Gastrocnemius medialis (tissue), 4 donors: ENCODE measurements at regions of chr3 and their contacts with region 1.

Region 1: DNA sequence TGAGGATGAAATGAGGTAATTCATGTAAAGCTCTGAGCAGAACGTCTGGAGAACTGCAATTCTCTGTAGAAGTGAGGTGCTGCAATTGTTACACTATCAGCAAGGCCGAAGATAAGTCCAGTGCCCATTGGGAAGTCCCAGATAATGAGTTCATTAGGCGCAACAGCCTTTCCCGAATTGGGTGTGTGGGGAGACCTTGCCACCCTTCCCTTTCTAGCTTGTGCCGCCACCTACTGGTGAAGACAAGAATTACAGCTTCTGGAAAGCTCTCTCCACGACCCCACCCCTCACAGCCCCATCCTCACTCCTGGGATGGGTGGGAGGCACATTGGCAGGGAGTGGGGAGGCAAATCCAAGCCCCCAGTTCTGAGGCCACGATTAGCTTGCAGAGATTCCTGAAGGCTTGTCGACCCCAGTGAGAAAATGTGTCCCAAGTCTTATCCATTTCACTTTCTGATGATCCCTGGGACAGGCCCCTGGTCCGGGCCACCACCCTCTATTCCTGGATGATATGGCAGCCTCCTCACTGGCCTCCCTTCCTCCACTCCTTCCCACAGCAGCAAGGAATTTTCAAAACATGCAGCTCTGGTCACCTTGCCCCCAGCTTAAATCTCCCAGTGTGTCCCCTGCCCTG is 36.4 kb downstream of the FAM3D start:
- DNase-seq: peak; percentile 30 to 36
- ATAC-seq: peak; percentile 50 to 58
- H3K4me3 ChIP-seq: no peak overlapping the region
- H3K27ac ChIP-seq: peak overlapping the region in 3 of 4 donors; percentile 45 to 57 (median 46)
- H3K4me1 ChIP-seq: peaks cover 26 to 33% of the 10 kb centered on the region in 2 donors
- H3K27me3 ChIP-seq: no peaks in the 10 kb centered on the region
- CTCF ChIP-seq: peak; percentile 80 to 96 (median 91)
- POLR2A ChIP-seq: no peak

Region 2: GRCh38 chr3:58568572-58569286 is 61.5 kb before region 1 on chr3:
- in situ Hi-C with region 1: loop called in 3 of 4 experiments (anchors 5 kb)
- intact Hi-C with region 1: loop called (anchors 1 kb)
- DNase-seq: peak; percentile 35 to 62
- ATAC-seq: peak; percentile 61 to 82
- H3K4me3 ChIP-seq: no peak overlapping the region
- H3K27ac ChIP-seq: no peak overlapping the region
- H3K4me1 ChIP-seq: no peaks in the 10 kb centered on the region
- H3K27me3 ChIP-seq: no peaks in the 10 kb centered on the region
- CTCF ChIP-seq: peak; percentile 81 to 95 (median 89)
- POLR2A ChIP-seq: no peak

Region 3: DNA sequence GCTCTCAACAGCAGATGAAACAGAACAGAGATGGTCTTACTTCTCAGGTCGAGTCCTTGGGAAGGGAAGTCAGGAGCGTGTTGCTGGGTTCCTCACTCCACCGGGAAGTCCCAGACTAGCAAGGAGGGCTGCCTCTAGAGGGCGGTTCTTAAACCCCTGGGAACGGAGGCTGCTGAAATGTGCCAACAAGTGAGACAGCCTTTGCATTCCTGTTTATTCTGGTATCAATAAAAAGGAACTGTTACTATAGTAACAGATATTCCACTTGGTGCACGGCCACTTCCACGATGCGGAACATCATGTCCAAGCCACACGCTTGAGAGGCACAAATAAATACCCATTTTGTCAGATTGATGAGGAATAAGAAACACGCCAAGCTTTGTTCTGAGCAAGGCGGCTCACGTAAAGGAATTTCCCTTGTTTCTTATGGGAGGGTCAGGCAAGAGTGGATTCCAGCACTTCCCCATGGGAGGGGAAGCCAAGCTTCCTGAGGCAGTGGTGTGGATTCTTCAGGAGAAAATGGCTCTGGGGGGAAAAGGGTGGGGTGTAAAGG is 52.8 kb before region 1 on chr3 and contains the start of gene FAM107A:
- in situ Hi-C with region 1: loop called in 2 of 4 experiments (anchors 5 kb)
- intact Hi-C with region 1: no loop called
- DNase-seq: peak in 1 of 2 donors; percentile 30
- ATAC-seq: peak; percentile 75 to 86
- H3K4me3 ChIP-seq: peak within 1 kb of the TSS; percentile 32 to 55 (median 43)
- H3K27ac ChIP-seq: peak within 1 kb of the TSS; percentile 66 to 81 (median 81)
- H3K4me1 ChIP-seq: peaks cover 0 to 4% of the 10 kb centered on the region in 2 donors
- H3K27me3 ChIP-seq: no peaks in the 10 kb centered on the region
- CTCF ChIP-seq: peak in 1 of 5 experiments; percentile 16
- POLR2A ChIP-seq: peak; percentile 31 to 63
- total RNA-seq, gene FAM107A: 21.1 to 28.5 (median 27.6) TPM

Region 4: DNA sequence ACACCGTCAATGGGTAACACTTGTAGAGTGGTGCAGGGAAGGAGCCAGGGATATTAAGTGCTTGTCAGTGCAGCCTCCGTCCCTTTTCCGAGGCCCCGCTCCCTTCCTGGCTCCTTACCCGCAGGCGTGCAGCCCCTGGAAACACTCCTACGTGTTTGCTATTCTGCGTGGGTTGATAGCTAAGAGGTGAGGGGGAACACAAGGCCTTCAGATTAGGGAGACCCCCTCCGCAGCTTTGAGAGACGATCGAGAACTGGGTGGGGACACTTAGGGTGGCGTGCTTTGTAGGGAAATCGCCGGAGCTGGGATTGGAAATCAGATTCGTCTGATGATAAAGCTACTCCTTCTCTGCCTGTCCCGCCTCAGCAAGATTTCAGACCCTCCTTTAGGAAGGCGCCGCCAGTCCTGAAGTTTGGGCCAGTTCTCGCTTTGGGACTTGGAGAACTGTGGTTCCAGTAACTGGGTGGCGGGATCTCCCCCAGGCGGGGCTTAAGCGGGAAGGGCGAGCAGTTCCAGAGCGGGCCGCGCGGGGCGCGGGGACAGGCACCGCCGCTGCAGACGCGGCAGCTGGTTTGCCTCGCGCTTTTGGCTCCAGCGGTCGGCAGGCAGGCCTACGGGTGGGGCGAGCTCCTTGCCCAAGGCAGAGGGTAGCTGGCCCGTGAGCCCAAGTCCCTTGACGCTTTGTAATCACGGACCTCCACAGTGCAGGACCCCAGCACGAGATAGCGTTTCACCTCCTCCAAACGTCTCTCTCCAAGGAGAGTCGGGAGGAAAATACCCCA is 45.0 kb before region 1 on chr3:
- in situ Hi-C with region 1: no loop called
- intact Hi-C with region 1: loop called (anchors 5 kb)
- DNase-seq: peak; percentile 59 to 75
- ATAC-seq: peak; percentile 89 to 94
- H3K4me3 ChIP-seq: peak overlapping the region; percentile 64 to 81 (median 75)
- H3K27ac ChIP-seq: peak overlapping the region; percentile 73 to 85 (median 78)
- H3K4me1 ChIP-seq: peaks cover 20 to 22% of the 10 kb centered on the region in 2 donors
- H3K27me3 ChIP-seq: peaks cover 13 to 15% (median 14%) of the 10 kb centered on the region in 3 donors
- CTCF ChIP-seq: peak; percentile 77 to 96 (median 85)
- POLR2A ChIP-seq: no peak

Region 5: DNA sequence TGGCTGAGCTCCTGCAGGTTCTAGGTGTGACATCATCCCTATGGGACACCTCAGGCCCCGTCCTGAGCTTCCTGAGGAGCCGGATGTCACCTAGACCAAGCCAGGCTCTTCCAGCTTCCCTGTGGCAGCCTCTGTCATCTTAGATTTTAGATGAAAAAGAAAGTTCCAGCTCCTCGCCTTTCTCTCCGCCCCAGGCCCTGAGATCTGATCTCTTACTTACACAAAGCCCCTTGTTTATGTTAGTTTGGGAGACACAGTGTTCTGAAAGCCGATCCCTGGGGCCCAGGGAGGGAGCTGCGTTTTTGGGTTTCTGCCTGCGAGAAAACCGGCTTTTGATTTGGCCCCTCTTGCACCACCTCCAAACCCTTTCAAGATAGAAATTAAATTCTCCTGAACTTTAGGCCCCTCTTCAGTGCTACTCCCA is 12.8 kb before region 1 on chr3:
- in situ Hi-C with region 1: no loop called
- intact Hi-C with region 1: no loop called
- DNase-seq: peak; percentile 62 to 69
- ATAC-seq: peak; percentile 84 to 85
- H3K4me3 ChIP-seq: no peak overlapping the region
- H3K27ac ChIP-seq: peak overlapping the region; percentile 66 to 77 (median 71)
- H3K4me1 ChIP-seq: peaks cover 4 to 9% of the 10 kb centered on the region in 2 donors
- H3K27me3 ChIP-seq: no peaks in the 10 kb centered on the region
- CTCF ChIP-seq: no peak
- POLR2A ChIP-seq: peak in 1 of 2 donors; percentile 28

Region 6: DNA sequence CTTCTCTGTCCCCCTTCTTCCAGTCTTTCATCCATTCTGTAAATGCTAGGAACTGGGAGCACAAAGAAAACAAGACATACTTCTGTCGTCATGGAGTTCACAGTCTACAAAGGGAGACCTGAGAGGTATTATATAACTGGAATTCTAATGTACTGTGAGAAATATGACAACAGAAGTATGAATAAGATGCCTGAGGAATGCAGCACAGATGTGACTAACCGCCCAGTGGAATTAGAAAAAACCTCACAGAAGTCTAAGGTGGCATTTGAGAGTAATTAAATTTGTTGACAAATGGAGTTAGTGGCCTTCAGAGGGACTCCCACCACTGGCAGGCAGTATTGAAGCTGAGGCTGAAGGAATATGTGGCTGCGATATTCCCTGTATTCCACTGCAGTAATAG is 204.9 kb after region 1 on chr3:
- in situ Hi-C with region 1: no loop called
- intact Hi-C with region 1: no loop called
- DNase-seq: no peak
- ATAC-seq: no peak
- H3K4me3 ChIP-seq: no peak overlapping the region
- H3K27ac ChIP-seq: no peak overlapping the region
- H3K4me1 ChIP-seq: no peaks in the 10 kb centered on the region
- H3K27me3 ChIP-seq: no peaks in the 10 kb centered on the region
- CTCF ChIP-seq: no peak
- POLR2A ChIP-seq: no peak

Region 7: DNA sequence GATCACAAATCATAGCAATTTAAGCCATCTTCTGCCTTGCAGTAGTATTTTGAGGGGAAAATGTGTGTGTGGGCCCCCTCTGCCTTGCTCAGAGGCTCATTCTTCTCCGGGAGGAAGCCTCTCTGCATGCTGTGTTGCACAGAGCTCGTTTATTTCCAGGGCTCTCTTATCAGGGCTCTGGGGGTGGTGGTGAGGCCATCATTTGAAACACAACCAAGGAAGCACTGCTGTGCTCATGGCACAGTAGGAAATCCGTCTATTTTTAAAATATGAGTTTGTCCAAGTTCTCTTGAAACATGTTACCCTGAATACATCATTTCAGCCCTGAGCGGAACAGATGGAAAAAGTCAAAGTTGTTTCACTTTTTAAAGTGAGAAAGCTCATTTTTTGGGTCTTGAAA is 788.6 kb after region 1 on chr3:
- in situ Hi-C with region 1: no loop called
- intact Hi-C with region 1: no loop called
- DNase-seq: no peak
- ATAC-seq: no peak
- H3K4me3 ChIP-seq: no peak overlapping the region
- H3K27ac ChIP-seq: no peak overlapping the region
- H3K4me1 ChIP-seq: no peaks in the 10 kb centered on the region
- H3K27me3 ChIP-seq: no peaks in the 10 kb centered on the region
- CTCF ChIP-seq: no peak
- POLR2A ChIP-seq: no peak